Ascending aorta (tissue), 2 donors: ENCODE measurements at regions of chr15 and their contacts with region 1.

Region 1: GRCh38 chr15:55649054-55649423 is 60.9 kb upstream of the PYGO1 start:
- DNase-seq: no peak
- H3K4me3 ChIP-seq: no peak overlapping the region
- H3K27ac ChIP-seq: no peak overlapping the region
- H3K4me1 ChIP-seq: no peaks in the 10 kb centered on the region
- H3K27me3 ChIP-seq: no peaks in the 10 kb centered on the region
- CTCF ChIP-seq: no peak

Region 2: DNA sequence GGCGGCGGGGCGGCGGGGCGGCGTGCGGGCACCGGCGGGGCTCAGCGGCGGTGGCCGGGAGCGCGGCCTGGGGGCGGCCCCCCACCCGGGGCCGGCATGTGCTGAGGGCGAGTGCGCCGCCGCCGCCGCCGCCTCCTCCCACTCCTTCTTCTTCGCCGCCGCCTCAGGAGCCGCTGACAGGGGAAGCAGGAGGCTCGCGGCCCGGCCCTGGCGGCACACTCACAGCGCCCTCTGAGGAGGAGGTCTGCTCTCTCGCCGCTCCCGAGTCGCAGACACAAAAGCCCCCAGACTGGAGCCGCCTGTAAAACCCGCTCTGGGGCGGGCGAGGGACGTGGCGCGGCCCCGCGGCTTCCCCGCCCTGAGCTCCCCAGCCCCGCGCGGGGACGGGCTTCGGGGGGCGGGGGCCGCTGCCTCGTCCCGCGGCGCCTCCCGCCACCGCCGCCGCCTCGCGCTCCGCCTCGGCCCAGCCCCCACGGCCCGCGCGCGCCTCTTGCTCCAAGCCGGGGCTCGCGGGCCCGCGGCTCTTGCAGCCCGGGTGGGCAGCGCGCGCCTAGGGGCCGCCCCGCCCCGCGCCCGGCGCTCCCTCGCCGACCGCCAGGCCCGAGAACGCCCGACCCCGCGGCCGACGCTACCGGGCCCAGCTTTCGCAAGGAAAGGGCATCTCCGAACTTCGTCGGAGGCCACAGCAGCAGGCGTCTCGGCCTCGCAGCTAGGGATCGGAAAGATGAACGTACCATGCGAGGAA is 60.8 kb before region 1 on chr15 and contains the start of gene PYGO1:
- intact Hi-C with region 1: no loop called
- DNase-seq: peak in 1 of 2 donors; percentile 69
- H3K4me3 ChIP-seq: peak within 1 kb of the TSS; percentile 73 to 80
- H3K27ac ChIP-seq: peak within 1 kb of the TSS; percentile 86 to 98
- H3K4me1 ChIP-seq: peaks cover 0 to 13% of the 10 kb centered on the region in 2 donors
- H3K27me3 ChIP-seq: no peaks in the 10 kb centered on the region
- CTCF ChIP-seq: no peak
- total RNA-seq, gene PYGO1: 7.1 TPM

Region 3: GRCh38 chr15:55846116-55846707 is 197.2 kb after region 1 on chr15:
- intact Hi-C with region 1: loop called (anchors 2 kb)
- DNase-seq: no peak
- H3K4me3 ChIP-seq: no peak overlapping the region
- H3K27ac ChIP-seq: no peak overlapping the region
- H3K4me1 ChIP-seq: no peaks in the 10 kb centered on the region
- H3K27me3 ChIP-seq: no peaks in the 10 kb centered on the region
- CTCF ChIP-seq: peak; percentile 29 to 80 (median 76)